Dendritic cell treated with granulocyte-macrophage colony-stimulating factor and Interleukin-4, amounts not matched to agents 40 ng/mL and 50 ng/mL, for 4 days (primary cell): ENCODE measurements at regions of chr1 and their contacts with region 1.

Region 1: GRCh38 chr1:904310-904950 is 19.3 kb upstream of the SAMD11 start:
- H3K4me3 Mint-ChIP-seq: peak overlapping the region; percentile 80
- H3K27ac Mint-ChIP-seq: peak overlapping the region; percentile 66
- H3K4me1 Mint-ChIP-seq: peaks cover 43% of the 10 kb centered on the region
- H3K27me3 Mint-ChIP-seq: peaks cover 57% of the 10 kb centered on the region

Region 2: DNA sequence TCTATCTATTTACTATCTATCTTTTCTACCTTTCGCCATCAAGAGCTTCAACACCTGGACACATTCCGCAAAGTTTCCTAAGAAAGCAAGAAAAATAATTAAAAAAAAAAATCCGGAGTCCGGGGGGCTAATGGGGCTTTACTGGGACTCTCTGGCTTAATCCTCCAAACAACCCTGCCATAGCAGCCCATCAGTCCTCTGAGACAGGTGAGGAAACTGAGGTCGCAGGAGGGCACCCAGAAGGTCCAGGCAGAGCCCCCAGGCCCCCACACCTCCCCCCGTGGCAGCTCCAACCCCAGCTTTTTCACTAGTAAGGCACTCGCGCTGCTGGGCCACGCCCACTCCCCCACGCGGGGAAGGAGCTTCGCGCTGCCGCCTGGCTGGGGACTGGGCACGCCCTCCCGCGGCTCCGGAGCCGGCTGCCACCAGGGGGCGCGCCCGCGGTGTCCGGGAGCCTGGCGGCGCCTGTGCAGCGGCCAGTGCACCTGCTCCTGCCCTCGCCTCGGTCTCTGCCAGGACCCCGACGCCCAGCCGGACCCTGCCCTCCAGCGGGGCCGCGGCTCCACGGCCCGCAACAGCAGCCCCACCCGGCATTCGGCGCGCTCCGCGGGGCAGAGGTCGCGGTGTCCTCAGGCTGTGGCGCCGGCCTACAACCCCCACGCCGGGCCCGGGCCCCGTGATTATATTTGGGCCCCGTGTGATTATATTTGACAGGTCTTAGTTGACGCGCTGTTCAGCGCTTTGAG is 34.8 kb before region 1 on chr1:
- intact Hi-C with region 1: no loop called
- H3K4me3 Mint-ChIP-seq: peak overlapping the region; percentile 33
- H3K27ac Mint-ChIP-seq: no peak overlapping the region
- H3K4me1 Mint-ChIP-seq: peaks cover 14% of the 10 kb centered on the region
- H3K27me3 Mint-ChIP-seq: peaks cover 4% of the 10 kb centered on the region

Region 3: DNA sequence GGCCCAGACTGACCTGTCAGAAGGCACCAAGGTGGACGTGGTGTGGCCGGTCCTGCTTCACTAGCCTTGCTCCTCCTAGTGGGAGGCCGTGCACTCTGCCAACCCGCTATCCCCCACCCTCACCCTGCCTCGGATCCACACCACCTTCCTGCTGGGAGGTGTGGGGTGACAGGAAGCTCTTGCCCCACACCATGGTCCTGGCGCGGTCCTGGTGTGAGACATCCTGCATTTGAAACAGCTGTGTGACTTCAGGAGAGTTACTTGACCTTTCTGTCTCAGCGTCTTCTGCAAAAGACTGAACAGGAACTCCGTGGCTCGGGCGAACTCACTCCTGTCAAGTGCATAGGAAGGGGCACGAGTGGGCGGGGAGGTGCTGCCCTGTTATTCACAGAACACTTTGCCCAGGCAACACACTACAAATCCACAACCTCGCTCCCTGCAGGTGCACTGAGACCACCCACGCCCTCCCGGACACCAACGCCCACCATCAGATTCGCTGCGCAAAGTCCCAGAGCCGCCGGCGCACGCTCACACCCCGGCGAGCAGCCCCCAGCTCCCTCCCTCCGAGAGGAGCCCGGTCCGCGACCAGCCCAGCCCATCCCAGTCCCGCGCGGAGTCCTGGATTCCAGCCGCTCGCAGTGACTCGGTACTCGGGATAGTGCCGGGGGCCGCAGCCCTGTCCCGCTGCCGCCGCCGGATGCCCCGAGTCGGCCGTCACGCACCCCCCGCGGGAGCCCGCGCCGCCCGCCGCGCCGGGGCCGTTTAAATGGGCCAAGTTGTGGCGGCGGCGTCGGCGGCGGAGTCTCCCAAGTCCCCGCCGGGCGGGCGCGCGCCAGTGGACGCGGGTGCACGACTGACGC is 18.9 kb after region 1 on chr1 and contains the start of gene SAMD11:
- intact Hi-C with region 1: loop called (anchors 2 kb)
- H3K4me3 Mint-ChIP-seq: peak within 1 kb of the TSS; percentile 69
- H3K27ac Mint-ChIP-seq: peak within 1 kb of the TSS; percentile 41
- H3K4me1 Mint-ChIP-seq: peaks cover 23% of the 10 kb centered on the region
- H3K27me3 Mint-ChIP-seq: peaks cover 87% of the 10 kb centered on the region

Region 4: GRCh38 chr1:958823-959729 is 54.6 kb after region 1 on chr1 and contains the start of gene NOC2L:
- intact Hi-C with region 1: loop called (anchors 5 kb)
- H3K4me3 Mint-ChIP-seq: peak within 1 kb of the TSS; percentile 94
- H3K27ac Mint-ChIP-seq: peak within 1 kb of the TSS; percentile 85
- H3K4me1 Mint-ChIP-seq: peaks cover 55% of the 10 kb centered on the region
- H3K27me3 Mint-ChIP-seq: peaks cover 21% of the 10 kb centered on the region

Region 5: DNA sequence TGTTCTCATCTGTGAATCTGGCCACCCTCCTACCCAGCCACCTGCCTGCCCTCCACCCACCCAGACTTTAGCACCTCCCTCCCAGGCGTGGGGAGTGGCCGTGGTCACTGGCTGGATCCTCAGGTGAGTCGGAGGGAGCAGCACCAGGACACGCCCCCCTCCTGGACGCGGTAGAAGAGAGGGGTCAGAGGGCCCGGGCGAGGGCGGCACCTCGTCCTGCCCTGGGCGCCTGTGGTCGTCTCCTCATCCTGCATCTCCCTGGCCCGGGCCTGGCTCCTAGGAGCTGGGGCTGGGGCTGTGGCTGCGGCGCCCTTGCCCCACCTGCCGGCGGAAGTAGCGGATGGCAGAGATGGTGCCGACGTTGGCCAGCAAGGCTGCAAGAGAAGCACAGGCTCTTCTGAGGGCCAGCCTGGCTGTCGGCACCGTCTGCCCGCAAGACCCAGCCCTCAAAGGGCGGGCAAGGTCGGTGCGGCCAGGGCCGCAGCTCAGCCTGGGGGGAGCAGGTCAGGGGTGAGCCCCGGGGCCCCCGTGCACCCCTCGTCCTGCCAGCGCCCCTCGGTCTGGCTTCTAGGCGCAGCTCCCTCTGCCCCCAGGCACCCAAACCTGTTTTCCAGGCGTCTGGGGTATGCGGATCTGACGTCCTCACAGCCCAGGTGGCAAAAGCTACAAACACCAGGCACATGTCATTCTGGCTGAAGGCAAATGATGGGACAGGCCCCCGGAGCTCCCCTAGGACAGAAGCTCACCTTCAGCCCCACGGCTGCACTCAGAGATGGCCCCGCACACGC is 71.7 kb after region 1 on chr1:
- intact Hi-C with region 1: loop called (anchors 1 kb)
- H3K4me3 Mint-ChIP-seq: no peak overlapping the region
- H3K27ac Mint-ChIP-seq: no peak overlapping the region
- H3K4me1 Mint-ChIP-seq: peaks cover 5% of the 10 kb centered on the region
- H3K27me3 Mint-ChIP-seq: peaks cover 59% of the 10 kb centered on the region